Brain microvascular endothelial cell (primary cell): ENCODE measurements at regions of chr3 and their contacts with region 1.

Region 1: GRCh38 chr3:157127831-157128767 is 31.8 kb downstream of the CCNL1 start:
- DNase-seq: peak; percentile 89
- H3K4me3 ChIP-seq: no peak overlapping the region
- H3K27ac ChIP-seq: peak overlapping the region; percentile 75
- H3K27me3 ChIP-seq: no peaks in the 10 kb centered on the region
- CTCF ChIP-seq: no peak

Region 2: GRCh38 chr3:157089455-157090221 is 38.5 kb before region 1 on chr3:
- in situ Hi-C with region 1: loop called (anchors 5 kb)
- DNase-seq: peak; percentile 28
- H3K4me3 ChIP-seq: peak overlapping the region; percentile 23
- H3K27ac ChIP-seq: peak overlapping the region; percentile 94
- H3K27me3 ChIP-seq: no peaks in the 10 kb centered on the region
- CTCF ChIP-seq: no peak